ENCODE measurements at regions of chr21 and their contacts with region 1.

Region 1: DNA sequence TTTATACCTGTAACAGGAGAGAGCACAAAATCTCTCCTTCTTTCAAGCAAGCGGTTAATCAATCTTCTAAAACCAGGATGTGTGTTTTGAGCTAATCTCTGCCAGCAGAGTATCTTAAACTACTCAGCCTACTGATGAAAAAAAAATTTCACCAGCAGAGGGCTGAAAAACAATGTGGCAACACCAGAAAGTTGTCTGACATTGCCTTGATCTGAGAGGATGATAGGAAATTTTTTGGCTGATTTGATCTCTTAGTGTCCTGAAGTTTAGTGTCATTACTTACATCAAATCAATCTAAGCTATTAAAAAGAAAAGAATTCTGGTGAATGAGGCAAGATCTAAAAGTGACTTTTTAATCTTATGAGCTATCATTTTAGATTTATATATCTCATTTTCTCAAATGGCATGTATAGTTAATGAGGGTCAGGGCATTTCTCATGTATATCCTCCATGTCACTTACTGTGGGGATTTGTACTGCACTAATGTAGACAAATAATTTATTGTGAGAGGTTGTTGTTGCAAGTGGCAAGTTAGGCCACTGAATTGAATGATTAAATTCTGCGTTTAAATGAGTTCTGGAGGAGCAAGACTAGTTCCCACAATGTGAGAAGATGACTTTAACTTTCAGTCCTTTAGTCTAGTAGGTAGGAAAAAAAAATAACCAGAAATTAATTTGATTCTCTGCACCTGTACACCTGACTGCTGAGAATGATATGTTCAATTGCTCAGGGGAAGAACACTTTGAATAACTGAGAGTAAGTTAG is 10.8 kb downstream of the ADAMTS1 start:
- H3K4me3 ChIP-seq: no peak overlapping the region
- H3K27ac ChIP-seq: no peak overlapping the region
- H3K4me1 ChIP-seq: peaks cover 12% of the 10 kb centered on the region; the same call in 1 of the 2 replicates
- CTCF ChIP-seq: no peak

Region 2: GRCh38 chr21:26669215-26669764 is 165.1 kb before region 1 on chr21:
- CTCF ChIA-PET with region 1: no interaction called
- POLR2A ChIA-PET with region 1: no interaction called
- H3K4me3 ChIP-seq: no peak overlapping the region
- H3K27ac ChIP-seq: no peak overlapping the region
- H3K4me1 ChIP-seq: no peaks in the 10 kb centered on the region
- CTCF ChIP-seq: no peak

Region 3: GRCh38 chr21:26715878-26716506 is 118.4 kb before region 1 on chr21:
- CTCF ChIA-PET with region 1: no interaction called
- POLR2A ChIA-PET with region 1: no interaction called
- H3K4me3 ChIP-seq: no peak overlapping the region
- H3K27ac ChIP-seq: no peak overlapping the region
- H3K4me1 ChIP-seq: no peaks in the 10 kb centered on the region
- CTCF ChIP-seq: peak; percentile 63; the same call in 1 of the 2 replicates

Region 4: GRCh38 chr21:26814374-26814773 is 20.0 kb before region 1 on chr21:
- CTCF ChIA-PET with region 1: interaction called, 17 read pairs
- POLR2A ChIA-PET with region 1: interaction called, 5 read pairs
- H3K4me3 ChIP-seq: no peak overlapping the region
- H3K27ac ChIP-seq: no peak overlapping the region
- H3K4me1 ChIP-seq: no peaks in the 10 kb centered on the region
- CTCF ChIP-seq: no peak